ENCODE measurements at regions of chr5 and their contacts with region 1.

Region 1: GRCh38 chr5:10627160-10627701 is 63.4 kb downstream of the ANKRD33B start:
- DNase-seq: no peak
- H3K4me3 ChIP-seq: peak overlapping the region in 6 of 7 experiments; percentile 29 to 76 (median 64)
- H3K27ac ChIP-seq: peak overlapping the region; percentile 59 to 81
- H3K4me1 ChIP-seq: peaks cover 10 to 44% (median 29%) of the 10 kb centered on the region in 4 experiments
- H3K27me3 ChIP-seq: no peaks in the 10 kb centered on the region

Region 2: DNA sequence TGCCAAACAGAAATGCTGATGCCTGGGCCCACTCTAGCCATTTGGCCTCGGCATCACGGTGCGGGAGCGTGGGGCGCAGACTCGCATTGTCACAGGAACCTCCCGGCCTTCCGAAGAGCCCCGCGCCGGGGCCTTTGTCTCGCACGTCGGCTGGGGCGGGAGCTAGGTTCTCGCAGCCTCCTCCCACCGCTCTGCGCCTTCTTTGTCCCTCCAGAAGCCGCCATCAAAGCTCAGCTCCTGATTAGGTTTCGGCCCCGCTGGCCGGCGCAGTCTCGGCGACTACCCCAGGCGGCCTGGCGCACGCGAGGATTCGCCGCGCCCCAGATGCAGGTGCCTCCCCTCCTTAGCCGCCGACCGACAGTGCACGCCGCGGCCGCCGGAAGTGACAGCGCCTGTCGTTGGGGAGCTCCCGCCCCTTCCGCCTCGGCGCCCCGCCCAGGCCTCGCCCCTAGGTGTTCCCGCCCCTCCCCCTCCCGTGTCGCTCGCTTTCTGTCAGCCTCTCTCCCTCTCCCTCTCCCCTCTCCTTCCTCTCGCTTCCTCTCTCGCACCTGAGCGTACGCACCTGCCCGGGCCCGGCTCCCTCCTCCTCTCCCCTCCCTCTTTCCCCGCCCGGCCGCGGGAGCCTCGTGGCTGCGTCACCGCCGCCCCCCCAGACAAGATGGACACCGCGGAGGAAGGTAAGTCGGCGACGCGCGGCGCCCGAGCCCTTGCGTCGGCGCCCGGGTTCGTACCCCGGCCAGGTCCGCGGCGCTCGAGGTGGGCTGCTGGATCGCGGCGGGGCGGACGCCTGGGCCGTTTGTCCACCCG is 273.8 kb before region 1 on chr5 and contains the start of gene MARCHF6:
- CTCF ChIA-PET with region 1: no interaction called
- POLR2A ChIA-PET with region 1: no interaction called
- DNase-seq: peak; percentile 93 to 96 (median 95)
- H3K4me3 ChIP-seq: peak within 1 kb of the TSS; percentile 84 to 100 (median 96)
- H3K27ac ChIP-seq: peak within 1 kb of the TSS; percentile 91 to 96
- H3K4me1 ChIP-seq: peaks cover 11 to 51% (median 36%) of the 10 kb centered on the region in 4 experiments
- H3K27me3 ChIP-seq: no peaks in the 10 kb centered on the region

Region 3: GRCh38 chr5:10559871-10560270 is 67.4 kb before region 1 on chr5:
- CTCF ChIA-PET with region 1: interaction called, 11 read pairs
- POLR2A ChIA-PET with region 1: no interaction called
- DNase-seq: no peak
- H3K4me3 ChIP-seq: no peak overlapping the region
- H3K27ac ChIP-seq: no peak overlapping the region
- H3K4me1 ChIP-seq: peaks cover 4 to 29% (median 27%) of the 10 kb centered on the region in 4 experiments
- H3K27me3 ChIP-seq: no peaks in the 10 kb centered on the region

Region 4: DNA sequence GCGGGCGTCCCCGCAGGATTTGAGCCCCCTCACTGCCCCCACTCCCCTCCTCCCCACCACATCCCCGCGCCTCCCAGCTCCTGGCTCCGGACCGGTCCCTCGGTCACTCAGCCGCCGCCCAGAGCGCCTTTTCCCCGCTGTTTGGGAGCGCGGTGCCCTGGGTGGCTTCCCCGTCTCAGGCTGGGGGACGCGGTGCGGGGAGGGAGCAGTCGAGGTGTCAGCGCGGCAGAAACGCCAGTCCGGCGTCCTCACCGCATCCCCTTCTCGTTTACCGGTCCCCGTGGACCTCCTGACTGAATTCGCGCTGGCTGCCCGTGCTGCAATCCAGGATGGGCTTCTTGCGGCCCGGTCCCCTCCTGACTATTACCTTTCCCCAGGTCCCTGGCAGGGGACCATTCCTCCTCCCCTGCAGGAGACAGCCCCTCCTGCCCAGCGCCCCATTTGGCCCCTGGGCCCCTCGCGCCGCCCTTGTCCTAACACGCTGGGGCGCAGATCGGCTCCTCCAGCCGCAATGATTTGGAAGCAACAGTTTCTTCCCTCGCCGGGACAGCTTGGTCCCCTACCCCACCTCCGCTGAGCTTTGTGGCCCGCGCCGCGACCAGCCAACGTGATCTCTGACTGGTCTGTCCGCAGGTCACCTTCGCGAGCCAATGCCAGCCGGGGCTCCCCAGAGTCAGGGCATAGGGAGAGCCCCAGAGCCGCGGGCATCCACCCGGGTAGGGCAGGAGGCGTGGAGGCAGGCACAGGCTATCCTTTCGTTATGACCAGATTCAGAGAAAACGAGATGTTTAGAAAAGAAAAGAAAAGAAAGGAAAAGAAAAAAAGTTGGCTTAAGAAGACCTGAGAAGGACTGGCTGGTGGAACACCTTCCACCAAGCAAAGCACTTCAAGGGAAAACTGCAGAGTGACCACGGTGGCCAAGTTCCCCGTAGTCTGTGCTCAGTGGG is 62.1 kb before region 1 on chr5:
- CTCF ChIA-PET with region 1: interaction called, 16 read pairs
- POLR2A ChIA-PET with region 1: no interaction called
- DNase-seq: peak in 1 of 3 donors; percentile 49
- H3K4me3 ChIP-seq: peak overlapping the region; percentile 25 to 88 (median 79)
- H3K27ac ChIP-seq: no peak overlapping the region
- H3K4me1 ChIP-seq: peaks cover 4 to 51% (median 48%) of the 10 kb centered on the region in 4 experiments
- H3K27me3 ChIP-seq: no peaks in the 10 kb centered on the region

Region 5: GRCh38 chr5:10577371-10578292 is 49.6 kb before region 1 on chr5:
- CTCF ChIA-PET with region 1: interaction called, 15 read pairs
- POLR2A ChIA-PET with region 1: no interaction called
- DNase-seq: no peak
- H3K4me3 ChIP-seq: no peak overlapping the region
- H3K27ac ChIP-seq: no peak overlapping the region
- H3K4me1 ChIP-seq: peaks cover 2 to 28% (median 24%) of the 10 kb centered on the region in 4 experiments
- H3K27me3 ChIP-seq: no peaks in the 10 kb centered on the region

Region 6: GRCh38 chr5:10583663-10584572 is 43.3 kb before region 1 on chr5:
- CTCF ChIA-PET with region 1: interaction called, 16 read pairs
- POLR2A ChIA-PET with region 1: interaction called, 4 read pairs
- DNase-seq: no peak
- H3K4me3 ChIP-seq: peak overlapping the region in 1 of 7 experiments; percentile 16
- H3K27ac ChIP-seq: no peak overlapping the region
- H3K4me1 ChIP-seq: peaks cover 7 to 50% (median 42%) of the 10 kb centered on the region in 4 experiments
- H3K27me3 ChIP-seq: no peaks in the 10 kb centered on the region

Region 7: GRCh38 chr5:10590226-10590999 is 36.8 kb before region 1 on chr5:
- CTCF ChIA-PET with region 1: interaction called, 16 read pairs
- POLR2A ChIA-PET with region 1: interaction called, 4 read pairs
- DNase-seq: peak in 2 of 3 donors; percentile 45 to 53
- H3K4me3 ChIP-seq: peak overlapping the region in 3 of 7 experiments; percentile 12 to 51 (median 33)
- H3K27ac ChIP-seq: peak overlapping the region in 1 of 2 experiments; percentile 82
- H3K4me1 ChIP-seq: peaks cover 7 to 59% (median 49%) of the 10 kb centered on the region in 4 experiments
- H3K27me3 ChIP-seq: no peaks in the 10 kb centered on the region

Region 8: GRCh38 chr5:10607666-10608073 is 19.6 kb before region 1 on chr5:
- CTCF ChIA-PET with region 1: interaction called, 184 read pairs
- POLR2A ChIA-PET with region 1: interaction called, 9 read pairs
- DNase-seq: peak; percentile 86 to 94 (median 88)
- H3K4me3 ChIP-seq: peak overlapping the region in 6 of 7 experiments; percentile 35 to 66 (median 38)
- H3K27ac ChIP-seq: peak overlapping the region; percentile 77 to 84
- H3K4me1 ChIP-seq: peaks cover 9 to 49% (median 28%) of the 10 kb centered on the region in 4 experiments
- H3K27me3 ChIP-seq: no peaks in the 10 kb centered on the region

Region 9: DNA sequence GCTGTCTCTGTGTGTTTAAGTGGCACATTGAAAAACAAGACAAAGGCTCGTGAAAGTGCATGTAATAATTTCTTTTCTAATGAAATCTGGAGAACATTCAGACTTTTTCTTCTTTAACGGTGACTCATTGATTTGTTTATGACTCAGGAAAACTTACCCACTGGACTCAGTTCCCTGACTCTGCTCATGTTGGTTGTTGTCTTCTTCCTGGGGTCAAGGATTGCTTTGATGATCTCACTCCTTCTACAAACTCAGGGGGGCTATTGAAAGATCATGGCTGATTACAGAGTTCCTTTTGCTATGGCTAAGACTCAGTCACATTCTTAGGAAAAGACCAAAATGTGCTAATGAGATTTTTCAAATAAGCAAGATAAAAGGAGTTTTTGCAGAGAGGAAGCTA is 274.9 kb after region 1 on chr5:
- CTCF ChIA-PET with region 1: no interaction called
- POLR2A ChIA-PET with region 1: no interaction called
- DNase-seq: no peak
- H3K4me3 ChIP-seq: no peak overlapping the region
- H3K27ac ChIP-seq: no peak overlapping the region
- H3K4me1 ChIP-seq: no peaks in the 10 kb centered on the region
- H3K27me3 ChIP-seq: no peaks in the 10 kb centered on the region